ENCODE measurements at regions of chr7 and their contacts with region 1.

Region 1: DNA sequence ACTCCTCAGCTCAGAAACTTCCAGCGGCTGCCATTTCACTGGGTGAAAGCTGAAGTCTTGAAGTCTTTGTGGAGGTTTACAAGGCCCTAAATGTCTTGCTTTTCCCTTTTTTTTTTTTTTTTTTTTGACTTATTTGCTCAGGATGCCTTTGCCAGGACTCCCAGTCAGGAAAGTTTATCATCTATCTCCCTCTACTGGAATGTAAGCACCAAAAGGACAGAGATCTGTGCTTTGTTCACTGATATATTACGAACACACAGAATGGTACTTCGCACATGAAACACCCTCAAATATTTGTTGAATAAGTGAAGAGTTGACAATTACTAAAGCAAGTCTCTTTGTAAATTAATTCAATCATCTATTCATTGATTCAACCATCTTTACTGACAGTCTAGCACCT is 23.2 kb downstream of the ABCB4 start:
- DNase-seq: no peak
- ATAC-seq: no peak
- H3K4me3 ChIP-seq: no peak overlapping the region
- H3K27ac ChIP-seq: no peak overlapping the region
- H3K4me1 ChIP-seq: peaks cover 0 to 17% of the 10 kb centered on the region in 2 donors
- H3K27me3 ChIP-seq: no peaks in the 10 kb centered on the region
- CTCF ChIP-seq: no peak
- POLR2A ChIP-seq: no peak

Region 2: GRCh38 chr7:87574630-87575029 is 122.4 kb after region 1 on chr7:
- in situ Hi-C with region 1: no loop called
- intact Hi-C with region 1: loop called (anchors 10 kb)
- DNase-seq: no peak
- ATAC-seq: peak; percentile 91 to 93
- H3K4me3 ChIP-seq: no peak overlapping the region
- H3K27ac ChIP-seq: peak overlapping the region in 1 of 4 donors; percentile 51
- H3K4me1 ChIP-seq: no peaks in the 10 kb centered on the region
- H3K27me3 ChIP-seq: no peaks in the 10 kb centered on the region
- CTCF ChIP-seq: no peak
- POLR2A ChIP-seq: no peak

Measured in gastrocnemius medialis (tissue), 4 donors.